WTC11 (cell line): ENCODE measurements at regions of chr3 and their contacts with region 1.

Region 1: GRCh38 chr3:183178629-183179549 is 16.4 kb upstream of the LAMP3 start:
- DNase-seq: peak; percentile 76
- ATAC-seq: peak; percentile 71
- H3K4me3 Mint-ChIP-seq: peak overlapping the region; percentile 71
- H3K27ac Mint-ChIP-seq: no peak overlapping the region
- H3K4me1 Mint-ChIP-seq: peaks cover 9% of the 10 kb centered on the region
- H3K27me3 Mint-ChIP-seq: peaks cover 49% of the 10 kb centered on the region
- CTCF ChIP-seq: no peak

Region 2: GRCh38 chr3:183122257-183122932 is 56.5 kb before region 1 on chr3:
- CTCF ChIA-PET with region 1: interaction called, 11 read pairs
- POLR2A ChIA-PET with region 1: no interaction called
- DNase-seq: no peak
- ATAC-seq: peak; percentile 44; the same call in 1 of the 2 replicates
- H3K4me3 Mint-ChIP-seq: no peak overlapping the region
- H3K27ac Mint-ChIP-seq: no peak overlapping the region
- H3K4me1 Mint-ChIP-seq: no peaks in the 10 kb centered on the region
- H3K27me3 Mint-ChIP-seq: peaks cover 13% of the 10 kb centered on the region
- CTCF ChIP-seq: peak; percentile 68

Region 3: DNA sequence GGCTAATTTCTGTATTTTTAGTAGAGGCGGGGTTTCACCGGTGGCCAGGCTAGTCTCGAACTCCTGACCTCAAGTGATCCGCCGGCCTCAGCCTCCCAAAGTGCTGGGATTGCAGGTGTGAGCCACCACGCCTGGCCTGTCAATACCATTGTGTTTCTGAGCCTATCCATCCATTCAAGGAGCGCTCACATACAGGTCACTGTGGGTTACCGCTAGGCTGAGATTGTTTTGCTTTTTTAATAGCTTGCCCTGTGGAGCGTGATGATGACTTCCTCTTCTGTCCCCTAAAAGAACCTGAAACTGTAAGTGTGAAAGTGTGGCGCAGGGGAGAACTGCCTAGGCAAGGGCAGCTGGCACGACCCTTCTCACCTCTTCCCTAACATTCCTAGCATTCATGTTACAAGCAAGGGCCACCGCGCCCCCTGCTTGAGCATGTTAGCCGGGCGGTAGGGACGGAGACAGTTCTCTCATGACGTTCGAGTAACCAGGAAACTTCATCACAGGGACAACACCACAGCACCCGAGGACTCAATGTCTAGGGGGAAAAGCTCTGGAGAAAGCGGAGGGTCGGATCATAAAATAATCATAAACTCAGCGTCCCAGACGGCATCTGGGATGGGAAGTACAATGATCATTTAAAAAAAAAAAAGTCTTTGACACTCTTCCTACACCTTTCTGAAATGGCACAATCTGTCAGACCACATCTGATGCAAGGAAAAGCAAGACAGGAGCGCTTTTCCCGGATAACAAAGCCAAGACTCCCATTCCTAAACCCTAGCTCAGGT is 17.1 kb before region 1 on chr3:
- CTCF ChIA-PET with region 1: interaction called, 12 read pairs
- POLR2A ChIA-PET with region 1: no interaction called
- DNase-seq: peak; percentile 72
- ATAC-seq: peak; percentile 66
- H3K4me3 Mint-ChIP-seq: peak overlapping the region; percentile 76
- H3K27ac Mint-ChIP-seq: no peak overlapping the region
- H3K4me1 Mint-ChIP-seq: peaks cover 10% of the 10 kb centered on the region
- H3K27me3 Mint-ChIP-seq: peaks cover 46% of the 10 kb centered on the region
- CTCF ChIP-seq: no peak

Region 4: GRCh38 chr3:183188895-183189462 is 10.1 kb after region 1 on chr3:
- CTCF ChIA-PET with region 1: interaction called, 17 read pairs
- POLR2A ChIA-PET with region 1: no interaction called
- DNase-seq: peak; percentile 77
- ATAC-seq: peak; percentile 93
- H3K4me3 Mint-ChIP-seq: no peak overlapping the region
- H3K27ac Mint-ChIP-seq: no peak overlapping the region
- H3K4me1 Mint-ChIP-seq: no peaks in the 10 kb centered on the region; the same call in 1 of the 2 replicates
- H3K27me3 Mint-ChIP-seq: no peaks in the 10 kb centered on the region
- CTCF ChIP-seq: no peak